ENCODE measurements at regions of chr17 and their contacts with region 1.

Region 1: GRCh38 chr17:1055751-1056645 is 59.1 kb downstream of the TIMM22 start:
- DNase-seq: peak; percentile 33
- H3K4me3 ChIP-seq: no peak overlapping the region
- H3K27ac ChIP-seq: no peak overlapping the region
- H3K27me3 ChIP-seq: no peaks in the 10 kb centered on the region
- CTCF ChIP-seq: peak; percentile 73

Region 2: GRCh38 chr17:996554-997344 is 59.2 kb before region 1 on chr17 and contains the start of gene TIMM22:
- CTCF ChIA-PET with region 1: interaction called, 141 read pairs
- POLR2A ChIA-PET with region 1: interaction called, 11 read pairs
- DNase-seq: peak; percentile 94
- H3K4me3 ChIP-seq: peak within 1 kb of the TSS; percentile 100
- H3K27ac ChIP-seq: peak within 1 kb of the TSS; percentile 91
- H3K27me3 ChIP-seq: no peaks in the 10 kb centered on the region
- CTCF ChIP-seq: peak; percentile 85
- polyA plus RNA-seq, gene TIMM22: 17.7 and 18.1 TPM in 2 replicates

Region 3: DNA sequence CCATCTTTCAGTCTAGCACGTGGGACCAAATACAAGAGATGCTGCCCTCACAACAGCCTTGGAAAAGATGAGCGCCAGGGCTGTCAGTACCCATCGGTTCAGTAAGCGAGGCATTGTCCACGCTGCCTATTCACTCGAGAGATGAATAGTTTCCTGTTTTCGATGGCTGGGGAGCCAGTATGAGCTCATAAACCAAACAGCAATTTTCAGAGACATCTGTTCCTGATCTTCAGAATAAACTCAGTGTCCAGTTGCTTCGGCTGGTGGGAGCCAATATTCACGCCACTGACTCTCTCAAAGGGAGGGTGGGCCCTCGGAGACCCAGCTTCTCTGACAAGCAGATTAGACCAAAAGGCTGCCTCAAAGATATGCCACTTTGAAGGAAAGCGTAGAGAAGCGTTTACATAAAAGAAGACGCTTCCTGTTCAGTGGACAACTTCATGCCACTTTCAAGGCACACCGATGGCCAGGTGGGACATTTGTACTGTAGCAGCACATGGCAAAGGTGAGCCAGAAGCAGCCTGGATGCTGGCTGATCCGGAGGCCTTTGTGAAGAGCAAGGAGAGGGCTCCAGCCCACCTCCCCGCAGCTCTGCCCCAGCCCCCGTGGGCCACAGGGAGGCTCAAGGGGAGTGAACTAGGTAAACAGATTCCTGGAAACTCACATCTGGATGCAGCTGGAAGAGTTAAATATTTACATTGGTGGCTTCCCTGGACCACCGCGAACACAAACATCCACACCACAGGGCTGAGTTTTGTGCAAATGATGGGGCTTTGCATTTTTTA is 53.0 kb before region 1 on chr17:
- CTCF ChIA-PET with region 1: interaction called, 141 read pairs
- POLR2A ChIA-PET with region 1: interaction called, 11 read pairs
- DNase-seq: peak; percentile 75
- H3K4me3 ChIP-seq: no peak overlapping the region; the same call in 1 of the 2 replicates
- H3K27ac ChIP-seq: peak overlapping the region; percentile 92
- H3K27me3 ChIP-seq: no peaks in the 10 kb centered on the region
- CTCF ChIP-seq: no peak

Region 4: DNA sequence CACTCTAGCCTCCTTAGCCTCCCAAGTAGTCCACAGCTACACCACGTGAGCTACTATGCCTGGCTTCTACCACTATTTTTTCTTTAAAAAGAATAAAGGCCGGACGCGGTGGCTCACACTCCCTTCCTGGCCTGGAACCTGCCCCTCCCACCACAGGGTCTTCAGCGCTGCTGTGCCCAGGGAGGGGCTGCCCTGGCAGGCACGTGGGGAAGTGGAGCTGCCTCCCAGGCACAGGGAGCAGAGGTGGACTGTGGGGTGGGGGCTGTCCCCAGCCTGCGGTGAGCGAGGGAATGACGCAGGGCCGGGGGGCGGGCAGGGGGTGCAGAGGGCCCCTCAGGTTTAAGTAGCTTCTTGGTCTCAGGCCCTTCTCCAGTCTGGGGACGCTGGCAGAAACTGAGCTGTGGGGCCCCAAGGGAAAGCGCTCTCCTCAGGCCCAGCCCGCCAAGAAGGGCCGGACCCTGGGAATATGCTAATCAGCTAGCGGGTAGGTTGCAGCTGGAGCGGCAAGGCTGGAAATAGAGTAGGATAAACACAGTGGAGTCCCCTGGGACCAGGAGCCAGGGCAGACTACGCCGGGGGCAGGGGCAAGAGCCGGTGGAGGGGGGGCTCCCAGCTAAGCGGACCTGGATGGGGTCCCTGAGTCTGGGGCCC is 12.3 kb before region 1 on chr17:
- CTCF ChIA-PET with region 1: interaction called, 18 read pairs
- POLR2A ChIA-PET with region 1: interaction called, 3 read pairs
- DNase-seq: no peak
- H3K4me3 ChIP-seq: no peak overlapping the region
- H3K27ac ChIP-seq: no peak overlapping the region
- H3K27me3 ChIP-seq: no peaks in the 10 kb centered on the region
- CTCF ChIP-seq: no peak

Region 5: GRCh38 chr17:1089915-1090314 is 33.9 kb after region 1 on chr17:
- CTCF ChIA-PET with region 1: no interaction called
- POLR2A ChIA-PET with region 1: no interaction called
- DNase-seq: no peak
- H3K4me3 ChIP-seq: no peak overlapping the region
- H3K27ac ChIP-seq: no peak overlapping the region
- H3K27me3 ChIP-seq: no peaks in the 10 kb centered on the region
- CTCF ChIP-seq: no peak

Region 6: DNA sequence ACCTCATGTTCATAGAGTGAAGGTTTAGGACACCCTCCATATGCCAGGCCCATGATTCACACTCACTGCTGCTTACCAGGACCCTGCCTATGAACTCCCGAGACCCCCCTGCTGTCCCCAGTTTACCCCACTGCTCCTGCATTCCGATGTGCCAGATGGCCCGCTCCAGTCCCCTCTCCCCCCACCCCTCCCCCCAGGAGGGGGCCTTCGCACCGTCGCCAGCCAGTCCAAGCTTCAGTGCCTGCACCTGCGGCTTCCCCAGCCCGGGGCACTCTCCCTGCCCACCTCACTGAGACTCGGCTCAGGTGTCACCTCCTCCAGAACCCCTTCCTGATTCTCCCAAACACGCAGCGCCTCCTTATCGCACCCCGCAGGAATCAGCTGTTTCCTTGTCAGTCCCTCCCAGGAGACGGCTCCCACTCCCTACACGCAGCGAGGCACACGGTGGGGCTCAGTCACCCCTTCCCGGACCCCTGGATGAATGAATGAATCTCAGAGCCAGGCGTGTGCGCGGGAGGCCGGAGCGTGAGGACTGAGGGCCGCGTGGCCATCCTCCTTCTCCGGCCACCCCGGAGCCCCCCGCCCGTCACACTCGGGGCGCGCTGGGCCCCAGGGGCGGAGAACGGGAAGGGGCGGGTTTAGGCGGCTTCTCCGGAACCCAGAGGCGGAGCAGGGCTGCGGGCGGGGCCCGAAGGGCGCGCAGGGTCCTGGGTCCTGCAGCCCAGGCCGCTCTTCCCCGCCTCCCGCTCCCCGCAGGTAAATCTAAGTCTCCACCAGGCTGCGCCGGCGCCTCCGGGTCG is 434.8 kb after region 1 on chr17:
- CTCF ChIA-PET with region 1: no interaction called
- POLR2A ChIA-PET with region 1: no interaction called
- DNase-seq: no peak
- H3K4me3 ChIP-seq: peak overlapping the region; percentile 84
- H3K27ac ChIP-seq: no peak overlapping the region
- H3K27me3 ChIP-seq: no peaks in the 10 kb centered on the region
- CTCF ChIP-seq: no peak

Measured in AG04450 (cell line).